Activated T-helper 1 cell treated with anti-CD3 and anti-CD28 coated beads, Interleukin-12 subunit alpha, Interleukin-12 subunit beta, Interleukin-2, Interleukin-4 antibody, amounts not matched to agents 30 ng/mL and 10 ng/mL and 1 ng/mL, durations not matched to agents 14 hours and 24 hours and 36 hours (primary cell): ENCODE measurements at regions of chr1 and their contacts with region 1.

Region 1: DNA sequence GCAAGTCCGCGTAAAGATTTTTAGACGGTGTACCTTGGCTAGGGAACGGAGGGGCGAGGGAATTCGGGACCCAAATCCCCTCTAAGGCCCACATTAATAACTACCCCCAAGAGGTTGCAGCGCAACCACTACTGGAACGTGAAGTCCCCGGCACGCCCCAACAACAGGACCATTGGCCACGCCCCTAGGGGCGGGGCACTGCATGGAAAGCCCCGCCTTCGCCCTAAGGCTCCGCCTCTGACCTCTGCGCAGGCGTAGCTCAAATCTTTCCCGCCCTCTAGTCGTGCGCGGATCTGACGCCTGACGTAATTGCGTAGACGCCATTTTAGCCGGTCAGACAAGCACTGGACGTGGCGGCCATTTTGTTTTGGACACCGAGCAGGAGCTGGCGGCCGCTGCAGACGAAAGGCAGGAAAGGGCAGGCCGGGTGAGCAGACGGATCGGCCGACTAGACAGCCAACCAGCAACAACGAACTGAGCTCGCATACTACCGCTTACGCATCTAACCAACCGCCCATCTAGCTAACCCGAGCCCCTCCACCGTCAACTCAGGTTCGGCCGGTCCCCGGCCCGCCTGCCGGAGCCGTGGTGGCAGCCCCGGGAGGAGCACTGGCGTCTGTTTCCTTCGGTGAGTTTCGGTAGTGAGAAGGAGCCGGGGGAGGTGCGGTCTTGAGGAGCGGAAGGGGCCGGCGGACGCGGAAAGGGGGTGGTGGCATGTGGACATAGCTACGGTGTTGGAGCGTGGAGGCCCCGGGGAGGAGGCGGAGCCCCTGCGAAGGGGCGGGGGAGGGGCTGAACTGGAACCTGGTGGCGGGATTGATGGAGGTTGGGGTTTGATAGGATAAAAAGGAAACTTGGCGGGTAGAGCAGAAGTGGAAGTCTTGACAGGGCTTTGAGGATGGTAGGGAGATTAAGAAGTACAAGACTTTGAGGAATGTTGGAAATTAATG is at the start of gene CHTOP:
- DNase-seq: peak; percentile 96
- H3K4me3 Mint-ChIP-seq: peak within 1 kb of the TSS; percentile 97
- H3K27ac Mint-ChIP-seq: peak within 1 kb of the TSS; percentile 100
- H3K4me1 Mint-ChIP-seq: peaks cover 45% of the 10 kb centered on the region
- H3K27me3 Mint-ChIP-seq: no peaks in the 10 kb centered on the region
- total RNA-seq, gene CHTOP: 101 and 105 TPM in 2 replicates

Region 2: DNA sequence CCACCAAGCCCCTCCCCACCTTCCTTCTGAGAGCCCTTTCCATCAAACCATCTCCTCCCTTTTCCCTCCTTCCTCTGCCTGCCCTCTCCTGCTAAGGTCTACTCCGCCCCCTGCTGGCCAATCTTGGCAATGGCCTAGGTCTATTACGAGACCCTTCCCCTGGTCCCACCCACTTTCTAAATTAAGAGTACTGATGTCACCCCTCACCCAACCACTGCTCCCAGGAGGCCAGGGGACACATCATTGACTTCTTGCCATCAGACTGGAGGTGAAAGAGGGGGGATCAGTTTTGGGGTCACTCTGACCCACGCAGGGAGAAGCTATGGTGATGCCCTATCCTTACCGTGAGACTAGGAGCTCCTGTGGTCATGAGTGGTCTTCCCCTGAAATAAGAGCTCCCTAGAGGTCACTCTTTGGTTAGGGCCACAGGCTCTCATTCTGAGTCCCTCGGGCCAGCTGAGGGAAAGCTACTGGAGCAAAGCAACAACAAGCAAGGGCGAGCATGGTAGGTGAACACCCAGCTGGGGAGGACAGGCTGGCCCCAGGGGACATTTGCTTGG is 138.9 kb before region 1 on chr1:
- intact Hi-C with region 1: no loop called
- DNase-seq: peak; percentile 59
- H3K4me3 Mint-ChIP-seq: no peak overlapping the region
- H3K27ac Mint-ChIP-seq: no peak overlapping the region
- H3K4me1 Mint-ChIP-seq: no peaks in the 10 kb centered on the region
- H3K27me3 Mint-ChIP-seq: peaks cover 16% of the 10 kb centered on the region

Region 3: GRCh38 chr1:153545067-153546055 is 88.6 kb before region 1 on chr1 and contains the start of gene S100A4:
- intact Hi-C with region 1: loop called (anchors 1 kb)
- DNase-seq: peak; percentile 93
- H3K4me3 Mint-ChIP-seq: peak within 1 kb of the TSS; percentile 90
- H3K27ac Mint-ChIP-seq: peak within 1 kb of the TSS; percentile 99
- H3K4me1 Mint-ChIP-seq: peaks cover 83% of the 10 kb centered on the region
- H3K27me3 Mint-ChIP-seq: peaks cover 2% of the 10 kb centered on the region
- total RNA-seq, gene S100A4: 165 and 167 TPM in 2 replicates

Region 4: DNA sequence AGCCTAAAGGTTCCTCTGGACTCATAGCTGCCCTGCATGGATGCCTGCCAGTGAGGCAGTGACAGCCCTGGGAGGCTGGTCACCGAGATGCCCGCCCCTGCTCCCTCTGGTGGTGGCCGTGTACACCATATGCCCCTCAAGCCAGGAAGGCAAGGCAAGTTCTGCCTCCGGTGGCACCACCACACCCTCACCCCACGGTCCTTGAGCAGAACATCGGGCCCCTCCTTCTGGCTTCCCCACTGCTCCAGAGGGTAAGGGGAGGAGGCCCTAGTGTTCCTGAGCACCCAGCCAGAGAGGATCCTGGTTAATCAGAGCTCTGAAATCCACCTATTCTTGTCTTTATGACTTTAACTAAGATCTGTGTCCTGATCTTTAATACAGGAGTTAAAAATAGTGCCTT is 16.3 kb before region 1 on chr1:
- intact Hi-C with region 1: loop called (anchors 1 kb)
- DNase-seq: peak; percentile 63
- H3K4me3 Mint-ChIP-seq: no peak overlapping the region
- H3K27ac Mint-ChIP-seq: no peak overlapping the region
- H3K4me1 Mint-ChIP-seq: peaks cover 8% of the 10 kb centered on the region
- H3K27me3 Mint-ChIP-seq: no peaks in the 10 kb centered on the region

Region 5: DNA sequence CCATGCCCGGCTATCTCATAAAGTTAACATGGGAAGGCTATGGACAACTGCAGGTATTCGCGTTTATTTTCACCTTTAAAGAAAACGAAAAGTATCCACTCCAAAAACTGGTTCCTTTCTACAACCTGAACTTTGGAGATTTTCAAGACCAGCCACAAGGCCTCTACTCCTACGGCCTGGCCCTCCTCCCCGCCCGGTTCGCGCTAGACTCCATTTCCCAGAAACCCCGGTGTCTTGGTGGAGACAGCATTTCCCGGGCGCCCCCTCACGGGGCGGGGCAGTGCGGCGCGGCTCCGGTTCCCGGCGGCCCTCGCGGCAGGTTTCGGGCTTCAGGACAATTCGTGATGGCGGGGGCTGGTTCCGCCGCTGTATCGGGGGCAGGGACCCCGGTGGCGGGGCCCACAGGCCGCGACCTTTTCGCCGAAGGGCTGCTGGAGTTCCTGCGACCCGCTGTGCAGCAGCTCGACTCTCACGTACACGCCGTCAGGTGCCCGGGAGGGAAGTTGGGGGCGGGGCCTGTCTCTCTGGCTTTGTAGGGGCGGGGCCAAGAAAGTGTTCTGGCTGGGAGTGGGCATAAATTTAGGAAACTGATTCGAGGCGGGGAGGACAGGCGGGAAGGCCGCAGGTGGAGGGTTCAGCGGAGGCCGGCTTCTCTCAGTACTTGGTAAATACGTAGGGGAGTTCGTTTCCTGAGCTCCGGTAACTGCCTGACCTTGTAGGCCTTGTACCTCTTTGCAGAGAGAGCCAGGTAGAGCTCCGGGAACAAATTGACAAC is 24.6 kb after region 1 on chr1 and contains the start of gene SNAPIN:
- intact Hi-C with region 1: loop called (anchors 1 kb)
- DNase-seq: peak; percentile 90
- H3K4me3 Mint-ChIP-seq: peak within 1 kb of the TSS; percentile 96
- H3K27ac Mint-ChIP-seq: peak within 1 kb of the TSS; percentile 84
- H3K4me1 Mint-ChIP-seq: peaks cover 11% of the 10 kb centered on the region
- H3K27me3 Mint-ChIP-seq: no peaks in the 10 kb centered on the region
- total RNA-seq, gene SNAPIN: 31.1 and 35.4 TPM in 2 replicates

Region 6: GRCh38 chr1:153783233-153784190 is 149.5 kb after region 1 on chr1:
- intact Hi-C with region 1: loop called (anchors 2 kb)
- DNase-seq: peak; percentile 90
- H3K4me3 Mint-ChIP-seq: peak overlapping the region; percentile 88
- H3K27ac Mint-ChIP-seq: peak overlapping the region; percentile 92
- H3K4me1 Mint-ChIP-seq: no peaks in the 10 kb centered on the region
- H3K27me3 Mint-ChIP-seq: peaks cover 16% of the 10 kb centered on the region

Region 7: DNA sequence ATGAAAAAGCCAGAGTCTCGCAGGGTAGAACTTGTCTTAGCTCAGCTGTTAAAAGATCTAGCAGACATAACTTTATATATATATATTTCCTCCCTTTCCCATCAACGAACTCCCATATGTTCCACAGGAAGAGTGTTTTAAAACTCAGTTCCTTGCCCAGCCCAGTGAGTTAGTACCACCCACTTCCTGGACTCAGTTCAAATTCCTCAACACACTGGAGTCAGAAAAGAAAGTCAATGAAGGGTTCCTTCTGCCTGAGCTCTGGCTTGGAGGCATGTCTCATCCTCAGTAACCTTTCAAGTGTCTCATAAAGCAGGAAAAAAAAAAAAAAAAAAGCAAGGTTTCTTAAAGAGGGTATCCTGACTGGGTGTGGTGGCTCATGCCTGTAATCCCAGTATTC is 542.3 kb after region 1 on chr1:
- intact Hi-C with region 1: no loop called
- DNase-seq: no peak
- H3K4me3 Mint-ChIP-seq: peak overlapping the region; percentile 8
- H3K27ac Mint-ChIP-seq: peak overlapping the region; percentile 42
- H3K4me1 Mint-ChIP-seq: peaks cover 74% of the 10 kb centered on the region
- H3K27me3 Mint-ChIP-seq: no peaks in the 10 kb centered on the region